H1 (cell line): ENCODE measurements at regions of chr2 and their contacts with region 1.

Region 1: DNA sequence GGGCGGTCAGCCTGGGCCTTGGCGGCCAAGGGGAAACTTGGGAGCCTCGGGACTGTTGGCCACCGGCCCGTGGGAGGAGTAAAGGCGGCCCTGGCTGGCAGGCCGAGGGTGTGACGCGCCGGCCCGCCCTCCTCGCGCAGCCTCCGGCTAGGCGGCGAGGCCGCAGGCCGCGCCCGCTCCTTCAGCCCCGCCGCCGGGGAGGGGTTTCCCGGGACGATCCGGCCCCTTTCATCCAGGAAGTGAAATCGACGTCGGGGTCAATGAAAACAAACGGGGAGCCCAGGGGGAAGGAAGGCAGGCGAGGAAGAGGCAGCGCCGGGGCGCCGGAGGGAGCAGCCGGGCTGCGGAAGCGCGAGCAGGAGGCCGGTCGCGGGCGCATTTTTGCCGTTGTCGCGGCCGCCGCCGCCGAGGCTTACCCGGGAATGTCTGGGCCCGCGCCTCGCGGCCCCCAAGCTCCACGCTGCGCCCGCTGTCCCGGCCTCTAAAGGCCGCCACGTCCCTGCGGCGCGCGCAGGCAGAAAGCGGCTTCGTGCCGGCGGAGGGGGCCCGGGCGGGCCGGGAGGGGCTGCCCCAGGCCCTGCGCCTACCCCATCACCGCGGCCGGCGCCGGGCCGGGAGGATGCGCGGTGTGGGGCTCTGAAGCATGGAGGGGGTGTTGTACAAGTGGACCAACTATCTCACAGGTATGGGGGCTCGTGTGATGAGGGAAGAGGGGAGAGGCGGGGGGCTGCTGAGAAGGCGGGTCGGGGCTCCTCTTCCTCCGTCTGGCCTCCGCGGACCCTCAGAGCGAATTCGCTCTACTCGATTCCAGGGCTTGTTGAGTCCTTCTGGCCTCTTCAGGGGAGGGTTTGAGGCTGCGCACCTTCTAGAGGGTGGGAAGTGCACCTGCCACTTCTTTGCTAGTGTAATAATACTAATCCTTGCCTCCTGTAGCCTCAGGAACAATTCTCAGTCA is at the start of gene PLEKHA3:
- DNase-seq: peak; percentile 75 to 90
- H3K4me3 ChIP-seq: peak within 1 kb of the TSS; percentile 50 to 83 (median 76)
- H3K27ac ChIP-seq: no peak within 1 kb of the TSS
- H3K4me1 ChIP-seq: peaks cover 0 to 12% (median 4%) of the 10 kb centered on the region in 4 experiments; a peak in 3 of 7 replicates
- H3K27me3 ChIP-seq: no peaks in the 10 kb centered on the region; a peak in 2 of 7 replicates
- CTCF ChIP-seq: no peak
- EP300 ChIP-seq: no peak
- POLR2A ChIP-seq: peak in 1 of 2 experiments; percentile 69; a peak in 1 of 3 replicates
- RAD21 ChIP-seq: no peak
- total RNA-seq, gene PLEKHA3: 20.1 and 22.3 TPM in 2 replicates

Region 2: GRCh38 chr2:178522950-178523595 is 42.6 kb after region 1 on chr2:
- CTCF ChIA-PET with region 1: interaction called, 14 read pairs
- POLR2A ChIA-PET with region 1: no interaction called
- DNase-seq: peak; percentile 78 to 94
- H3K4me3 ChIP-seq: peak overlapping the region; percentile 84 to 90 (median 86)
- H3K27ac ChIP-seq: peak overlapping the region; percentile 59; the same call in 1 of the 2 replicates
- H3K4me1 ChIP-seq: no peaks in the 10 kb centered on the region
- H3K27me3 ChIP-seq: no peaks in the 10 kb centered on the region
- CTCF ChIP-seq: peak; percentile 71 to 95 (median 91)
- EP300 ChIP-seq: no peak
- POLR2A ChIP-seq: peak in 1 of 2 experiments; percentile 93; a peak in 2 of 3 replicates
- RAD21 ChIP-seq: peak; percentile 60 to 62

Region 3: DNA sequence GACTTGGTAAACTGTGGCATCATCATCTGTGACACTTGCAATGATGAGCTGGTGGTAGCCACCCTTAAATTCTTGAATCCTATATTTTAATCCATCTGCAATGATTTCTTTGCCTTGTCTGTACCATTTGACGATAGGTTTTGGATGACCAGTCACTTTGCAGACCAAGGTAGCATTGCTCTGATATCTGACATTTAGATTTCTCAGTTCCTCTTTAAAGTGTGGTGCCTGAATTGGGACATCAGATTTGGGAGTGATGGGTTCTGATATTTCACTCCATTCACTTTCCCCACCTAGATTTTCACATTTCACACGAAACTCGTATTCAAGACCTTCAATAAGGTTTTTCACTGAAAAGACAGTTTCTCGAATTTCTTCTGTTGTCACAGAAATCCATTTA is 55.5 kb after region 1 on chr2:
- CTCF ChIA-PET with region 1: no interaction called
- POLR2A ChIA-PET with region 1: no interaction called
- DNase-seq: no peak
- H3K4me3 ChIP-seq: no peak overlapping the region
- H3K27ac ChIP-seq: no peak overlapping the region
- H3K4me1 ChIP-seq: peaks cover 0 to 3% (median 0%) of the 10 kb centered on the region in 4 experiments; a peak in 1 of 7 replicates
- H3K27me3 ChIP-seq: no peaks in the 10 kb centered on the region
- CTCF ChIP-seq: no peak
- EP300 ChIP-seq: no peak
- POLR2A ChIP-seq: no peak
- RAD21 ChIP-seq: no peak

Region 4: GRCh38 chr2:178628605-178629004 is 148.1 kb after region 1 on chr2:
- CTCF ChIA-PET with region 1: no interaction called
- POLR2A ChIA-PET with region 1: no interaction called
- DNase-seq: no peak
- H3K4me3 ChIP-seq: no peak overlapping the region
- H3K27ac ChIP-seq: no peak overlapping the region
- H3K4me1 ChIP-seq: no peaks in the 10 kb centered on the region
- H3K27me3 ChIP-seq: no peaks in the 10 kb centered on the region
- CTCF ChIP-seq: no peak
- EP300 ChIP-seq: no peak
- POLR2A ChIP-seq: no peak
- RAD21 ChIP-seq: no peak